ENCODE measurements at regions of chr13 and their contacts with region 1.

Region 1: DNA sequence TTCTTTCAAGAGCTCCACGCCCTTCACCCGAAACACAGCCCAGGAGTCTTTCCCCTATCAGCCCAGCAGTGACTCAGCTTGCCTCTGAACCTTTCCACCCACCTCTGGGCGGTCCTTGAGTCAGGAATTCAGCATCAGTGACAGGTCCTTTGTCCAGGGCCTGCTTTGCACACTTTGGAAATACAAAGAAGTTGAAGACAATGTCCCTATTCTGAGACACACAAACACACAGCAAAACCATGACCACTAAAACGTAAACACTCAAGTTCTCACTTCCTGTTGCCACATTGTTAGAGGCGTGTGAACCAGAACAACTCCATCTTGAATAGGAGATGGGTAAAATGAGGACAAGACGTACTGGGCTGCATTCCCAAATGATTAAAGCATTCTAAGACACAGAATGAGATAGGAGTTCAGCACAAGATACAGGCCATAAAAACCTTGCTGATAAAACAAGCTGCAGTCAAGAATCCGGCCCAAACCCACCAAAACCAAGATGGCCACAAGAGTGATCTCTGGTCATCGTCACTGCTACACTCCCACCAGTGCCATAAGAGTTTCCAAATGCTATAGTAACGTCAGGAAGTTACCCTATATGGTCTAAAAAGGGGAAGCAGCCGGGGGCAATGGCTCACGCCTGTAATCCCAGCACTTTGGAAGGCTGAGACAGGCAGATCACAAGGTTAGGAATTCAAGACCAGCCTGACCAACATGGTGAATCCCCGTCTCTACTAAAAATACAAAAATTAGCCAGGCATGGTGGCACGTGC is 49.2 kb upstream of the ATP12A start:
- DNase-seq: no peak
- H3K4me3 ChIP-seq: no peak overlapping the region
- H3K27ac ChIP-seq: no peak overlapping the region
- H3K4me1 ChIP-seq: no peaks in the 10 kb centered on the region
- H3K27me3 ChIP-seq: no peaks in the 10 kb centered on the region
- CTCF ChIP-seq: no peak
- EP300 ChIP-seq: no peak
- POLR2A ChIP-seq: no peak

Region 2: GRCh38 chr13:23934520-23934919 is 696.5 kb before region 1 on chr13:
- intact Hi-C with region 1: loop called in 1 of 4 experiments (anchors 5 kb)
- DNase-seq: no peak
- H3K4me3 ChIP-seq: no peak overlapping the region
- H3K27ac ChIP-seq: no peak overlapping the region
- H3K4me1 ChIP-seq: no peaks in the 10 kb centered on the region
- H3K27me3 ChIP-seq: no peaks in the 10 kb centered on the region
- CTCF ChIP-seq: no peak
- EP300 ChIP-seq: no peak
- POLR2A ChIP-seq: no peak